Kidney (tissue), 22 donors: ENCODE measurements at regions of chr15 and their contacts with region 1.

Region 1: DNA sequence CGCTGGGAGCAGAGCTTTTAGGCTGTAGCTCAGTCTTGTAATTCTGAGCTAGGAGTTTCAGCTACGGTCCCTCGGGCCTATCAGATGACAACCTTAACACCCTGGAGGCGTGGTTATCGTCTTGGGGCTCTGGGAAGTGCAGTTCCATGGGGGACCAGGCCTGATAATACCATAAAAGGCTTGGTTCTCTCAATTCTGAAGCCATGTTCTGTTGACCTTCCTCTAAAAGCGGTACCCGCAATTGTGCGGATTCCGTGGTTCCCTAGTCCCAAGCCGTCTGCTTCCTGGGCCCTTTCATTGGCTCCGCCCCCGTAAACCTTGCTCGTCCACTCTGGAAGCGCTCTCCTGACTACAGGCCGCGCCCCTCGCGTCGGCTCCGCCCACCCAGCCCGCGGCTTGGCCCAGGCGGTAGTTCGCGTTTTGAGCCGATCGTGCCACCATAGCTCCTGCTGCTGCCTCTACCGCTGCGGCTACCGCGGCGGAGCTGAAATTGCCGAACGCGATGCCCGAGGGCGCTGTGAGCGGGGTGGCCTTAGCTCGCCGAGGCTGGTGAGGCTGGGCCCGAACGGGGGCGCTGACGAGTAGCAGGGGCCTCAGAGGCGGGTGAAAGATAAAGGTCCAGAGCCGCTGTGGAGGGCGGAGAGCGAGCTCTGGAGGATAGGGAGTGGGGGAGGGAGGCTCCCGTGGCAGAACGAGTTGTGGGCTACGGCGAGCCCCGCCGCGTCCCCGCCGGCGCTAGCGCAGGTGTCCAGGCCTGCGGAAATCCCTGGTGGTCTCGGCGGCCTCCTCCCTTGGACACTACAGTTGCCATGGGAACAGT is at the start of gene MAPKBP1:
- DNase-seq: peak; percentile 98 to 99 (median 99)
- H3K4me3 ChIP-seq: peak within 1 kb of the TSS; percentile 66 to 90 (median 88)
- H3K27ac ChIP-seq: peak within 1 kb of the TSS; percentile 75 to 85
- H3K4me1 ChIP-seq: peaks cover 3 to 27% (median 5%) of the 10 kb centered on the region in 3 donors
- H3K27me3 ChIP-seq: no peaks in the 10 kb centered on the region
- CTCF ChIP-seq: peak; percentile 73
- total RNA-seq, gene MAPKBP1: 28.6 TPM

Region 2: GRCh38 chr15:41585127-41586047 is 188.9 kb before region 1 on chr15:
- intact Hi-C with region 1: no loop called
- DNase-seq: peak in 3 of 5 donors; percentile 61 to 81 (median 76)
- H3K4me3 ChIP-seq: peak overlapping the region; percentile 41 to 59 (median 46)
- H3K27ac ChIP-seq: peak overlapping the region; percentile 22 to 63
- H3K4me1 ChIP-seq: peaks cover 0 to 6% (median 0%) of the 10 kb centered on the region in 3 donors
- H3K27me3 ChIP-seq: no peaks in the 10 kb centered on the region
- CTCF ChIP-seq: peak; percentile 19

Region 3: DNA sequence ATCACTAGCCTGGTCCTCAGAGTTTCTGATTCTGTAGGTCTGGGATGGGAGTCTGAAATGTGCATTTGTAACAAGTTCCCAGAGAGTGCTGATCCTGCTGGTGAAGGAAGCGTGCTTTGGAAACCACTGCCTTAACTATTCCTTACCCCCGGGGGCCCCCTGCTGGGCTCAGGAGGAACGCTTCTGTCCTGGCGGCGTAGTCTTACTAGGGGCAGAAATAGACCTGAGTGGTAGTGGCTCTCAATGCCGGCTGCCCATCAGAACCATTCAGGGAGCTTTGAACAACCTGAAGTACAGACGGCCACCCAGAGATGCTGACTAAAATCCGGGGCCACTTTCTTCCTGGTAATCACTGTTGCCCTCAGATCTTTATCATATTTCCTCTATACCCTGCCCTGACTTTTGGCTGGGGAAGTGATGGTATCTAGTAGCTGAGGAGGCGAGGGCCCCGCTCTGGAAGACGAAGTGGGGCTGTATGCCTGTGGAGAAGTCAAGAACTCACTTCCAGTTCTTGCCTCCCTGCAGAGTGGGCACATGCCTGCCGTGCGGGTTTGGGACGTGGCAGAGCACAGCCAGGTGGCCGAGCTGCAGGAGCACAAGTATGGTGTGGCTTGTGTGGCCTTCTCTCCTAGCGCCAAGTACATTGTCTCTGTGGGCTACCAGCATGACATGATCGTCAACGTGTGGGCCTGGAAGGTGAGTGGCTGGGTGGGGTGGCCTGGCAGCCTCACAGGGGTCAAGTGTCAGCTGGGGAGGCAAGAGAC is 37.3 kb after region 1 on chr15:
- intact Hi-C with region 1: loop called (anchors 5 kb)
- DNase-seq: peak; percentile 84 to 93 (median 88)
- H3K4me3 ChIP-seq: no peak overlapping the region
- H3K27ac ChIP-seq: no peak overlapping the region
- H3K4me1 ChIP-seq: peaks cover 0 to 2% (median 0%) of the 10 kb centered on the region in 3 donors
- H3K27me3 ChIP-seq: no peaks in the 10 kb centered on the region
- CTCF ChIP-seq: peak; percentile 89